GM12878 (cell line): ENCODE measurements at regions of chr2 and their contacts with region 1.

Region 1: DNA sequence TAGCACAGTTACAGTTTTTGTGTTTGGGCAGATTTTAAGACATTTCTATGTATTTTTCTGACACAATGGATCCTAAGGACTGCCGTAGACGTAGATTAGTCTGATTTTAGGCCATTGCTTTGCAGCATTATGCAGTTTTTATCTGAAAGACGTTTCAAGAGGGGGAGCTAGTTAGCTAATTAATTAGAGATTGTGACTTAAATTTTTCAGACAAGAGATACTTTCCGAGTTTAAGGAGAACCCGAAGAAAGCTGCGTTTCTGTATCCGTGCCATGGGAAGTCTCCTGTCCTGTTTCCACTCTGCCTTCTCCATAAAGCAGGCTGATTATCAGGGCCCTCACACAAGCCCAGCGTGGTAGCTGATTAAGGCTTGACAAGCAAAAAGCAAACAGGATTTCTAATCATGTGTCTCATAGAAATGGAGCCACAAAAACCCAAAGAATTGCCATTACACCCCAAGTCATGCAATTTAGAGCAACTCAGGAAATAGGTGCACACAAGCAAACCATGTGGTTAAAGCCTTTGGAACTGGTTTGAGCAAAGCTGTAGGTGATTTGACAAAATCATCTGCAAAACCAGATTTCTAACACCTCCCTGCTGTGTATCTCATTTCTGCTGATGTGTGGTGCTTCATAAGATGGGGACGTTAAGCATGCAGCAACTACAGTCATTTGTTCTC is 808.1 kb downstream of the RNF144A start:
- DNase-seq: peak; percentile 73
- ATAC-seq: peak; percentile 51
- H3K4me3 ChIP-seq: no peak overlapping the region
- H3K27ac ChIP-seq: no peak overlapping the region; the same call in 1 of the 2 replicates
- H3K4me1 ChIP-seq: peaks cover 4% of the 10 kb centered on the region; the same call in 1 of the 2 replicates
- H3K27me3 ChIP-seq: no peaks in the 10 kb centered on the region; a peak in 1 of 4 replicates
- CTCF ChIP-seq: peak in 1 of 3 experiments; percentile 24; a peak in 1 of 6 replicates
- EP300 ChIP-seq: peak; percentile 63 to 68; a peak in 2 of 4 replicates
- POLR2A ChIP-seq: no peak
- RAD21 ChIP-seq: peak; percentile 27; the same call in 1 of the 2 replicates

Region 2: DNA sequence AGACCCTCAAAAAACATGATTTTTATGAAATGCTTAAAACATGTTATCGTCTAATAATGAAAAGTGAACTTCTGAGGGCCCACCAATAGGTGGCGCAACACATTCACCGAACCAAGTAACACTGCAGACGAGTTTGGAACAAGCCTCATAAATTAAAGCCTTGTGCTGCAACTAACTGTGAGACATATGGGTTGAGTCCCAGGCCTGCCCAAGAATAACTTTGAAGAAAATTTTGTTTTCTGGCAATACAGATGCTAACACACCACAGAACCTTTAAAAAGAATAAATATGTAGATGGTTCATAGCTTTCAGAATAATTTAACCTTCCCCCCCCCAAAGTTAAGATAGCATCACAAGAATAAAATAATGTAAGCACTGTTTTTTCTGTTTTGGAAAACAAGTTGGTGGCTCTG is 522.2 kb before region 1 on chr2:
- CTCF ChIA-PET with region 1: interaction called, 3 read pairs
- POLR2A ChIA-PET with region 1: no interaction called
- RAD21 ChIA-PET with region 1: no interaction called
- SMC1A ChIA-PET with region 1: no interaction called
- in situ Hi-C with region 1: no loop called
- intact Hi-C with region 1: loop called (anchors 5 kb)
- DNase-seq: peak; percentile 16
- ATAC-seq: peak; percentile 86
- H3K4me3 ChIP-seq: no peak overlapping the region
- H3K27ac ChIP-seq: no peak overlapping the region
- H3K4me1 ChIP-seq: no peaks in the 10 kb centered on the region
- H3K27me3 ChIP-seq: no peaks in the 10 kb centered on the region
- CTCF ChIP-seq: peak; percentile 77 to 96 (median 88)
- EP300 ChIP-seq: no peak
- POLR2A ChIP-seq: no peak
- RAD21 ChIP-seq: peak; percentile 85

Region 3: GRCh38 chr2:7242189-7242867 is 483.0 kb before region 1 on chr2:
- CTCF ChIA-PET with region 1: no interaction called
- POLR2A ChIA-PET with region 1: no interaction called
- RAD21 ChIA-PET with region 1: no interaction called
- SMC1A ChIA-PET with region 1: no interaction called
- in situ Hi-C with region 1: no loop called
- intact Hi-C with region 1: no loop called
- DNase-seq: peak; percentile 9
- ATAC-seq: peak; percentile 65
- H3K4me3 ChIP-seq: no peak overlapping the region
- H3K27ac ChIP-seq: no peak overlapping the region
- H3K4me1 ChIP-seq: no peaks in the 10 kb centered on the region
- H3K27me3 ChIP-seq: no peaks in the 10 kb centered on the region
- CTCF ChIP-seq: no peak
- EP300 ChIP-seq: no peak
- POLR2A ChIP-seq: no peak
- RAD21 ChIP-seq: no peak

Region 4: DNA sequence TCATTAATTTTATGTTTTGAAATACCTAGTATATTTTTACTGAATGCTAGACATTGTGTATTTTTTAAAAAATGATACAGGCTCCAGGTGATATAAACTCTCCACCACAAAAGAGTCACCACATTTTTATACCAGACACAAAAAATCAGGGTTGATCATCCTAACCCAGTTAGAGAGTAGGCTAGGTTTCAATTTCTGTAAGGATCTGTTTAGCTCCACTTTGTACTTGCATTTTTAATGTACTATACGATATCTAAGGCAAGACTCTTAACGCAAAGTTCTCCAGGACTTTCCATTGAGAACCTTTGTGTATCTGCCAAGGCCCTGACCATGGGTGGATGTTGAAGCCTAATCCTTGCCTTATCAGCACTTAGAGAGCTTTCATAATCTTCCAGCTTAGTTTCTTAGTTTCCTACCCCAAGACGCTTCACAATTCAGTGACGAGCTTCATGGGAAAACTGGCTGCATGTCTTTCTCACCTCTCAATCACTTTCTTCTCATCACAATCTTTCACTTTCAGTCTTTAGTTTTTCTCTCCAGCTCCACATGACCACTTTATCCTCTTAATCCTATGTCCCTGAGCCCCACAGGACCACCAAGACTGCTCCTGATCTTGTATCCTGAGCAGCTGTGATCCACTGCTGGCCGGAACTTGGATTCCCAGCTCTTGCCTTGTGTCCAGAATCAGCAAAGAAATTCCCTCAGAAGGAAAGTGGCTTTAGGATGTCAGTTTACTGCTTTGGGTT is 172.3 kb before region 1 on chr2:
- CTCF ChIA-PET with region 1: no interaction called
- POLR2A ChIA-PET with region 1: no interaction called
- RAD21 ChIA-PET with region 1: no interaction called
- SMC1A ChIA-PET with region 1: no interaction called
- in situ Hi-C with region 1: no loop called
- intact Hi-C with region 1: no loop called
- DNase-seq: no peak
- ATAC-seq: no peak
- H3K4me3 ChIP-seq: no peak overlapping the region
- H3K27ac ChIP-seq: no peak overlapping the region
- H3K4me1 ChIP-seq: no peaks in the 10 kb centered on the region
- H3K27me3 ChIP-seq: no peaks in the 10 kb centered on the region
- CTCF ChIP-seq: no peak
- EP300 ChIP-seq: no peak
- POLR2A ChIP-seq: no peak
- RAD21 ChIP-seq: no peak

Region 5: DNA sequence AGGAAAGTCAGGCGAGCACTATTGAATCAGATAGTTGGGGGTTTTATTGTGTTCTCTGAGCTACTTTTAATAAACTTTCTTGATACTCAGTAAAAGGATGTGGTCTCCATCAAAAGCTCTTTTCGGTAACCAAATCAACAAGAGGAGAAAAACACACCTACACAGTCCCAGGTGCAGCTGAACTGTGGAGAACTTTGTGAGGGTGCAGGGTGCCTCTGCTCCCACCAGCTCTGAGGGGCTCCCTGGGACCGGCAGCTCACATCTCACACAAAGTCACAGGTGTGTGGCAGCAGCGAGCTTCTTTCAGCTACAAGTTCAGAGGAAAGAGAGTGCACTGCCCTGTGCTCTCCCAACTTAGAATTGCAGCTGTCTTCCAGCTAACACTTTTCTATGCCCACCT is 157.7 kb before region 1 on chr2:
- CTCF ChIA-PET with region 1: interaction called, 8 read pairs
- POLR2A ChIA-PET with region 1: no interaction called
- RAD21 ChIA-PET with region 1: interaction called, 16 read pairs
- SMC1A ChIA-PET with region 1: interaction called, 12 read pairs
- in situ Hi-C with region 1: no loop called
- intact Hi-C with region 1: no loop called
- DNase-seq: peak; percentile 39
- ATAC-seq: peak; percentile 94
- H3K4me3 ChIP-seq: no peak overlapping the region
- H3K27ac ChIP-seq: no peak overlapping the region
- H3K4me1 ChIP-seq: peaks cover 6% of the 10 kb centered on the region
- H3K27me3 ChIP-seq: no peaks in the 10 kb centered on the region; a peak in 1 of 4 replicates
- CTCF ChIP-seq: peak in 2 of 3 experiments; percentile 12 to 26; a peak in 2 of 6 replicates
- EP300 ChIP-seq: peak in 1 of 2 experiments; percentile 78; a peak in 2 of 4 replicates
- POLR2A ChIP-seq: no peak
- RAD21 ChIP-seq: no peak

Region 6: DNA sequence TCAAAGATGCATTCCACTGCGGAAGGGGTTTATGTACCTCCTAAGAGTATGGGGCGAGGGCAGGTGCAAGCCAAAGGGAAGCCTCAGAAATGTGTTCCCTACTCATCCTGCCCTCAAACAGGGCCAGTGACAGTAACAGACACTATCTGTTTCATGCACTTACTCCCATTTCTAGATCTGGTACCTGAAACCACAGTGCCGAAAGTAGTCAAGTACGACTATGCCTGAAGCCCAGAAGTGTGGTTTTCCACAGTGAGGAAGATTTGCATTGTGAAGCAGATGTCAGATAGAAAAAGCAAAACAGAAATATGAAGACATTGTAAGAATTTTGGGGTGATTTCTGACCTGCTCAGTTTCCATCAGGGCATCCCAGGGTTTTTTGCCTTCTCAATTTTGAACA is 59.4 kb before region 1 on chr2:
- CTCF ChIA-PET with region 1: interaction called, 4 read pairs
- POLR2A ChIA-PET with region 1: no interaction called
- RAD21 ChIA-PET with region 1: interaction called, 9 read pairs
- SMC1A ChIA-PET with region 1: interaction called, 9 read pairs
- in situ Hi-C with region 1: no loop called
- intact Hi-C with region 1: loop called (anchors 5 kb)
- DNase-seq: peak; percentile 53
- ATAC-seq: peak; percentile 93
- H3K4me3 ChIP-seq: no peak overlapping the region; the same call in 1 of the 2 replicates
- H3K27ac ChIP-seq: no peak overlapping the region
- H3K4me1 ChIP-seq: peaks cover 4% of the 10 kb centered on the region; the same call in 1 of the 2 replicates
- H3K27me3 ChIP-seq: no peaks in the 10 kb centered on the region
- CTCF ChIP-seq: no peak
- EP300 ChIP-seq: peak; percentile 41 to 68; a peak in 2 of 4 replicates
- POLR2A ChIP-seq: no peak
- RAD21 ChIP-seq: no peak

Region 7: DNA sequence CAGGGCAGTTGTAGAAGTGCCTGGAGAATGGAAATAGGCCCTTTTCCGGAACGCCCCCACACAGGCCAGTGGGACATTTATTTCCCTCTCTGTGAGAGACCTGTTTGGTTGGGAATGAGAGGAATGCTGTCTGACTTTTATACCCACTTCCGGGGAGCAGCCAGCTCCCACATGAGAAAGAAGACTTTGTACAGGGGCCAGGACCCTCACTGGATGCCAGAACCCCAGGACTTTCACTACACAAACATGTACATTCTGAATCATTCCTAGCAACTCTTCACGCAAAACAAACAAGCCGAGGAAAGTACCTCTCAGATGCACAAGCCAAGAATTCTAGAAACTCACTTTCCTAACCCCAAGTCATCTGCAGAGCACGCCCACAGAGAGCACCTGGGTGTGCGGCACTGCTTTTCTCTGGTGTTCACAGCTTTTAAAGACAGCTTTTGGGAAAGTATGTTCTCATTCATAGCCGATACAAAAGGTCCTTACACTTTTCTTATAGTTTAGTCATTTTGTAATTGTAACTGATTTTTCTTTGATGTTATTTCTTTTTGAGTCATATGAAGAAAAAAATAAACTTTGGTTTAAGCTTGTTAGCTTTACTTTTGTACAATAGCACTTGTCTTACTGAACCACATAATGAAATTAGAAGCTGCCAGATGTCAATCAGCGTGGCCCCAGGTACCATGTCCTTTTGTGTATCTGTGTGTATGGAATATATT is 100.4 kb after region 1 on chr2:
- CTCF ChIA-PET with region 1: interaction called, 7 read pairs
- POLR2A ChIA-PET with region 1: interaction called, 3 read pairs
- RAD21 ChIA-PET with region 1: interaction called, 8 read pairs
- SMC1A ChIA-PET with region 1: interaction called, 11 read pairs
- in situ Hi-C with region 1: no loop called
- intact Hi-C with region 1: loop called (anchors 5 kb)
- DNase-seq: peak; percentile 78
- ATAC-seq: peak; percentile 97
- H3K4me3 ChIP-seq: no peak overlapping the region
- H3K27ac ChIP-seq: peak overlapping the region; percentile 75
- H3K4me1 ChIP-seq: peaks cover 10% of the 10 kb centered on the region
- H3K27me3 ChIP-seq: no peaks in the 10 kb centered on the region
- CTCF ChIP-seq: no peak
- EP300 ChIP-seq: peak; percentile 94 to 98
- POLR2A ChIP-seq: no peak
- RAD21 ChIP-seq: peak; percentile 19; the same call in 1 of the 2 replicates

Region 8: GRCh38 chr2:7984693-7985353 is 259.5 kb after region 1 on chr2:
- CTCF ChIA-PET with region 1: no interaction called
- POLR2A ChIA-PET with region 1: no interaction called
- RAD21 ChIA-PET with region 1: no interaction called
- SMC1A ChIA-PET with region 1: no interaction called
- in situ Hi-C with region 1: no loop called
- intact Hi-C with region 1: no loop called
- DNase-seq: no peak
- ATAC-seq: peak; percentile 92
- H3K4me3 ChIP-seq: no peak overlapping the region
- H3K27ac ChIP-seq: no peak overlapping the region
- H3K4me1 ChIP-seq: peaks cover 11% of the 10 kb centered on the region
- H3K27me3 ChIP-seq: no peaks in the 10 kb centered on the region
- CTCF ChIP-seq: no peak
- EP300 ChIP-seq: peak; percentile 11 to 39; a peak in 2 of 4 replicates
- POLR2A ChIP-seq: no peak
- RAD21 ChIP-seq: no peak

Region 9: GRCh38 chr2:8234757-8235374 is 509.6 kb after region 1 on chr2:
- CTCF ChIA-PET with region 1: interaction called, 5 read pairs
- POLR2A ChIA-PET with region 1: no interaction called
- RAD21 ChIA-PET with region 1: interaction called, 8 read pairs
- SMC1A ChIA-PET with region 1: interaction called, 10 read pairs
- in situ Hi-C with region 1: no loop called
- intact Hi-C with region 1: loop called (anchors 5 kb)
- DNase-seq: peak; percentile 90
- ATAC-seq: peak; percentile 88
- H3K4me3 ChIP-seq: peak overlapping the region; percentile 26; the same call in 1 of the 2 replicates
- H3K27ac ChIP-seq: peak overlapping the region; percentile 41
- H3K4me1 ChIP-seq: peaks cover 39% of the 10 kb centered on the region
- H3K27me3 ChIP-seq: no peaks in the 10 kb centered on the region
- CTCF ChIP-seq: no peak
- EP300 ChIP-seq: peak; percentile 78 to 84
- POLR2A ChIP-seq: no peak
- RAD21 ChIP-seq: no peak

Region 10: DNA sequence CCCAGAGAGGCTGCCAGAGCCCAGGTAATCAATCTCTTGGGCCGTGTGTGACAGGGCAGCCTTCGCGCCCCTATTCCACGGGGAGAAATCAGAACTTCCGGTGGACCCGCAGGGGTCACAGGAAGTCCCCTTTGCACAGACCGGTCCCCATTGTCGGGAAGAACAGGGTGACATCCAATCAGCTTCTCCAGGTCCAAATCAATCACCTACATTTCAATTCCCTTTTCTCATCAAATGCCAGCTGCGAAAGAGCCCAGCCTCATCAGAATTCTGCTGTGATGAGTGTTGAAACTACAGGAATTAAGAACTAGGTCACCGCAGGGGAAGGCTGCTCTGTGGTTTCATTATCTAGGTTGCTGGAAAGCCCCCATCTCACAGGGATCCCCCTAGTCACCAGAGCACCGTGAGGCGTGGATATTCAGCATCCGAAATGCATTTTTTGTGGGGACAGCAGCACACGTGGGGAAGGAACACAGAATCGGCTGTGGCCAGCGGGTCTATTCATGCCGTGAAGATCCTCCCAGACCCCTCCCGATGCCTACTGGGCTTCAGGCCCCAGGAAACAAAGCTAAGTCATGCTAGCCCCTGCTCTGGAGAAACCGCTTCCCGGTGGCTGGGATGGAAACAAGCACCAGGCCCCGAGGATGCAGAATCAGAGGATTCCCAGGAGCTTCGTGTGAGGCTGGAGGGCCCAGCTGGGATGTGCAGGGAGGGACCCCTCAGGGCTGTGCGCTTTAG is 762.9 kb after region 1 on chr2:
- CTCF ChIA-PET with region 1: no interaction called
- POLR2A ChIA-PET with region 1: no interaction called
- RAD21 ChIA-PET with region 1: interaction called, 4 read pairs
- SMC1A ChIA-PET with region 1: interaction called, 5 read pairs
- in situ Hi-C with region 1: no loop called
- intact Hi-C with region 1: loop called (anchors 10 kb)
- DNase-seq: peak; percentile 95
- ATAC-seq: peak; percentile 63
- H3K4me3 ChIP-seq: peak overlapping the region; percentile 75
- H3K27ac ChIP-seq: peak overlapping the region; percentile 80
- H3K4me1 ChIP-seq: peaks cover 19% of the 10 kb centered on the region
- H3K27me3 ChIP-seq: no peaks in the 10 kb centered on the region
- CTCF ChIP-seq: no peak
- EP300 ChIP-seq: peak; percentile 78 to 80; a peak in 3 of 4 replicates
- POLR2A ChIP-seq: no peak
- RAD21 ChIP-seq: peak; percentile 1; the same call in 1 of the 2 replicates